Left colon (tissue), 2 donors: ENCODE measurements at regions of chr3 and their contacts with region 1.

Region 1: DNA sequence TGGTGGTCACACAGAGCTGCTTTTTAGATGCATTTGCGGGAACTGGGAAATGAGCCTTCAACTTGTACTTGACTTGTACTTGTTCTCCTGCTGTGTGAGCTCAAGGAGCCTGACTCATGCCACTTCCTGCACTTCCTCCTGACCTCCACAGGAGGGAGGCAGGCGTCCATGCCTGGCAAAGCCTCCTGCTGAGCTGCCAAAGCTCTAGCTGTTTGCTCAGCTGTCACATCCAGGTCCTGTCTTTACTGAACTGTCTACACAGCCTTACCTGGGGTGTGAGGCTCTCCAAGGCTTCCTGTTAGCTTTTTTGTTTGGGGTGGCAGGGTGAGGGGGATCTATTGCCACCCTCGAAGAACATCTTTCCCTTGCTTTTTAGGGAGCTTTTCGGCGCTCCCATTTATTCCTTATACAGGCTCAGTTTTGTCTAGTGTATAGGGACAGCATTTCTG is 6.4 kb downstream of the THPO start:
- DNase-seq: peak; percentile 69 to 77
- ATAC-seq: peak; percentile 91

Region 2: GRCh38 chr3:184513276-184514170 is 141.9 kb after region 1 on chr3:
- intact Hi-C with region 1: loop called in 1 of 2 experiments (anchors 5 kb)
- DNase-seq: peak; percentile 70 to 91
- ATAC-seq: peak; percentile 100

Region 3: GRCh38 chr3:184543843-184544512 is 172.4 kb after region 1 on chr3:
- intact Hi-C with region 1: loop called in 1 of 2 experiments (anchors 10 kb)
- DNase-seq: peak; percentile 63 to 75
- ATAC-seq: peak; percentile 60

Region 4: GRCh38 chr3:184629555-184630160 is 258.1 kb after region 1 on chr3:
- intact Hi-C with region 1: no loop called
- DNase-seq: no peak
- ATAC-seq: no peak